Psoas muscle (tissue), 8 donors: ENCODE measurements at regions of chr14 and their contacts with region 1.

Region 1: GRCh38 chr14:90660865-90661570 is 155.2 kb downstream of the TTC7B start:
- DNase-seq: no peak
- ATAC-seq: no peak
- H3K4me3 ChIP-seq: no peak overlapping the region
- H3K27ac ChIP-seq: no peak overlapping the region
- H3K4me1 ChIP-seq: peaks cover 32% of the 10 kb centered on the region
- H3K27me3 ChIP-seq: no peaks in the 10 kb centered on the region
- CTCF ChIP-seq: no peak

Region 2: DNA sequence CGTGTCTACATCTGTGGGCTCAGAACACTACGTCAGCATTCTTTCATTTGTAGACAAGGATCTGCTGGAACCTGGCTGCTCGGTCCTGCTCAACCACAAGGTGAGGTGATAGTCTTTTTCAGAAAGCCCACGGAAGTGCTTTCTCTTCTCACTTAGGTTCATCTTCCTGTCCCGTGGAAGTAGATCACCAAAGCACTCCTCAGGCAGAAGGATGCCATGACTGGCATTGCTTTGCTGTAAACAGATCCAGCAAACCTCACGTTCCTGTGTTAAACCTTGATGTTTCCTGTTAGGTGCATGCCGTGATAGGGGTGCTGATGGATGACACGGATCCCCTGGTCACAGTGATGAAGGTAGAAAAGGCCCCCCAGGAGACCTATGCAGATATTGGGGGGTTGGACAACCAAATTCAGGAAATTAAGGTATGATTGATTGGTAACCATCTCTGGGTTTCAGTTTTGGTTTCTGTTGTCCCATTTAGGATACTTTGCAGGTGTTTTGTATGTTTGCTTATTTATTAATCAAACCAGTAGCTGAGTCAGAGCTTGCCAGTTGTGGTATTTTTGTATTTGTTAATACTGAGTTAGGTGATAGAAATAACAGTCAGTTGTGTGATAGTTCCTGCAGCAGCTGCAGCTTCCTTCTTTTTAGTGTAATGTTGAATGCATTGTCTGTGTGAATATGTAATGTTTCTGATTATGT is 397.1 kb before region 1 on chr14:
- intact Hi-C with region 1: no loop called
- DNase-seq: no peak
- ATAC-seq: no peak
- H3K4me3 ChIP-seq: no peak overlapping the region
- H3K27ac ChIP-seq: no peak overlapping the region
- H3K4me1 ChIP-seq: no peaks in the 10 kb centered on the region
- H3K27me3 ChIP-seq: no peaks in the 10 kb centered on the region
- CTCF ChIP-seq: no peak

Region 3: DNA sequence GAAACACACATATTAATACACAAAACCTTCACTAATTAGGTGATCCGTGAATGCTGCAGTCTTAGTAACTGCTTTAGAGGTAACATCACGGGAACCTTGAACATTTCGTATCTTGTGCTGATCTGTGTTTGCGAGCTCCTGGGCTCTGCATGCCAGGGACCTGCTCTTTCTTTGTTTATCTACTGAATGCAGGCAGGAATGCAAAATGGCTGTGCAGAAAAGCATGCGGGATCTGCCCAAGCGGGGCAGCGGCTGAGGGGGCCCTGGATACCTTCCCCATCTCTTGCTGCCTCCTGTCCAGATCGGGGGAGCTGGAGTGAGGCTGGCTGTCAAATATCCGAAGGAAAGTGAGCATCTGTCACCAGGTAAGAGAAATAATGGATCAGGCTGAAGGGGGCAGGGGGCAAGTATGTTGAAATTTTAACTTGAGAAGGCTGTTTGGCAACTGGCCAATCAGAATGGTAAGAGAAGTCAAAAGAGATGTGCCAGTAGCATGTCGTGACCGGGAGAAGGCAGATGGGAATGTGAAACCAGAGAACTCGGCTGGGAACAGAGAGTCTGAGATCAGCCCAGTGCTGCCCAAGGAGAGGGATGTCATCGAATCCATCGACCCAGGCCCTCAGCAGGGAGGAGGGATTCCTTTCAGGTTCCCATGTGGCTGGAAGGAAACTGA is 36.2 kb before region 1 on chr14:
- intact Hi-C with region 1: loop called (anchors 5 kb)
- DNase-seq: no peak
- ATAC-seq: peak; percentile 57 to 67 (median 64)
- H3K4me3 ChIP-seq: peak overlapping the region; percentile 26
- H3K27ac ChIP-seq: peak overlapping the region; percentile 94
- H3K4me1 ChIP-seq: peaks cover 55% of the 10 kb centered on the region
- H3K27me3 ChIP-seq: no peaks in the 10 kb centered on the region
- CTCF ChIP-seq: no peak

Region 4: DNA sequence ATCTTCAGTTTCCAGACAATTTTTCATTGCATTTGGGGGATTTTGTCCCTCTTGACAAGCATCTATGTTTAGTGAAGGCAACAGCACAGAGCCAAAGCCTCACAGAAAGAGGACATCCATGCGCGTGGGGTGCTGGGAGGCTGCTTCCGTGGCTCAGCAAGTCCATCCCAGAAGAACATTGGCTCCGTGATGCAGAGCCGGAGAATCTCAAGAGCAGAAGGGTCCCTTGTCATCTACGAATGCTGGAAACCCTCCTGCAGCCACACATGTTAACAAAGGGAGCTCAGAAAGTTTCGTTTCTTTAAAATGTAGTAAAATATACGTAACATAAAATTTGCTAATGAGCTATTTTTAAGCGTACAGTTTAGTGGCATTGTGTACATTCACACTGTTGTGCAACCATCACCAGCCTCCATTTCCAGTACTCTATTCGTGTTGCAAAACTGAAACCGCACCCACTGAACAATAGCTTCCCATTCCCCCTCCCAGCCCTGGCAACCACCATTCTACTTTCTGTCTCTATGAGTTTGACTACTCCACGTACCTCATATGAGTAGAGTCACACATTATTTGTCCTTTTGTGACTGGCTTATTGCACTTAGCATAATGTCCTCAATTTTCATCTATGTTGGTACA is 30.7 kb before region 1 on chr14:
- intact Hi-C with region 1: loop called (anchors 5 kb)
- DNase-seq: no peak
- ATAC-seq: no peak
- H3K4me3 ChIP-seq: no peak overlapping the region
- H3K27ac ChIP-seq: peak overlapping the region; percentile 94
- H3K4me1 ChIP-seq: peaks cover 57% of the 10 kb centered on the region
- H3K27me3 ChIP-seq: no peaks in the 10 kb centered on the region
- CTCF ChIP-seq: no peak